CD8-positive, alpha-beta T cell (primary cell): ENCODE measurements at regions of chr1 and their contacts with region 1.

Region 1: GRCh38 chr1:206734499-206735142 is 36.0 kb upstream of the IL19 start:
- DNase-seq: peak; percentile 66 to 87 (median 82)
- ATAC-seq: peak; percentile 57
- H3K4me3 ChIP-seq: no peak overlapping the region
- H3K4me3 Mint-ChIP-seq: no peak overlapping the region
- H3K27ac ChIP-seq: peak overlapping the region in 1 of 2 experiments; percentile 54
- H3K27ac Mint-ChIP-seq: peak overlapping the region; percentile 91
- H3K4me1 ChIP-seq: peaks cover 55% of the 10 kb centered on the region
- H3K4me1 Mint-ChIP-seq: peaks cover 55% of the 10 kb centered on the region
- H3K27me3 ChIP-seq: no peaks in the 10 kb centered on the region
- H3K27me3 Mint-ChIP-seq: no peaks in the 10 kb centered on the region
- CTCF ChIP-seq: peak; percentile 90

Region 2: DNA sequence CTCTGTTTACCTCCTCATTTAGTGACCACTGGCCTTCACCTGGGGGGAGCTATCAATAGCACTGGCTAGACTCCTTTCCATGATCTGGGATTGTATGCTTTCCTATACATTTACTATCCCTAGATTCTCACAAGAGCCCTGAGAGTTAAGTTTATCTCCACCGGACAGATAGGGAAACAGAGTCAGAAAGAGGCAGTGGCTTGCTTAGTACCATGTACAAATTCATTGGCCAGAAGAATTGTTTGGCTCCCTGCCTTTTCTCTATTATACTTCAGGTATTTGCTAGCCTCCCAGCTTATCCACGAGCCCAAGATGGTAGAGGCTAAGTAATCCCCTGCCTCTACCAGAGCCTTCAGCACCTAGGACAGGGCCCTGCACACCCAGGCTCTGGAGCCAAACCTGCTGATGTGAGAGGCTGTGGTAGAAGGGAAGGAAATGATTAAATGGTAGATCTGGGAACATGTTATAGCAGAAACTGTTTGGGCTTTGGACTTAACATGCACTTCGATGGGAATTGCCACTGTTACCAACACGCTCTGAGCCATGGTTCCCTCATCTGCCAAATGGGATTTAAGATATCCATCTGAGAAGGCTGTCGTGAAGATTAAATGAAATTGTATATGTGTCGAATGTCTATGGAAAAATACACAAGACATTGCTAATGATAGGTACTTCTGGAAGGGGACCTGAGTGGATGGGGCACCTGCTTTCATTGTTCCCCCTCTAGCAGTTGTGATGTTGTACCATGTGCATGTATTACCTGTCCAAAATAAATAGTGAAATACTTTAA is 1275.6 kb before region 1 on chr1:
- CTCF ChIA-PET with region 1: no interaction called
- POLR2A ChIA-PET with region 1: no interaction called
- intact Hi-C with region 1: no loop called
- DNase-seq: peak in 7 of 9 experiments; percentile 9 to 59 (median 49)
- ATAC-seq: peak; percentile 73
- H3K4me3 ChIP-seq: no peak overlapping the region
- H3K4me3 Mint-ChIP-seq: no peak overlapping the region
- H3K27ac ChIP-seq: no peak overlapping the region
- H3K27ac Mint-ChIP-seq: no peak overlapping the region
- H3K4me1 ChIP-seq: peaks cover 17% of the 10 kb centered on the region
- H3K4me1 Mint-ChIP-seq: peaks cover 12% of the 10 kb centered on the region
- H3K27me3 ChIP-seq: peaks cover 30 to 31% of the 10 kb centered on the region in 2 experiments
- H3K27me3 Mint-ChIP-seq: peaks cover 47% of the 10 kb centered on the region
- CTCF ChIP-seq: no peak

Region 3: GRCh38 chr1:206744683-206745082 is 10.1 kb after region 1 on chr1:
- CTCF ChIA-PET with region 1: interaction called, 39 read pairs
- POLR2A ChIA-PET with region 1: no interaction called
- intact Hi-C with region 1: no loop called
- DNase-seq: peak in 1 of 9 experiments; percentile 50
- ATAC-seq: peak; percentile 45
- H3K4me3 ChIP-seq: no peak overlapping the region
- H3K4me3 Mint-ChIP-seq: no peak overlapping the region
- H3K27ac ChIP-seq: no peak overlapping the region
- H3K27ac Mint-ChIP-seq: peak overlapping the region; percentile 46
- H3K4me1 ChIP-seq: peaks cover 11% of the 10 kb centered on the region
- H3K4me1 Mint-ChIP-seq: peaks cover 40% of the 10 kb centered on the region
- H3K27me3 ChIP-seq: no peaks in the 10 kb centered on the region
- H3K27me3 Mint-ChIP-seq: no peaks in the 10 kb centered on the region
- CTCF ChIP-seq: no peak

Region 4: GRCh38 chr1:206766251-206766856 is 31.7 kb after region 1 on chr1:
- CTCF ChIA-PET with region 1: interaction called, 117 read pairs
- POLR2A ChIA-PET with region 1: interaction called, 10 read pairs
- intact Hi-C with region 1: loop called (anchors 2 to 5 kb)
- DNase-seq: peak; percentile 47 to 89 (median 77)
- ATAC-seq: peak; percentile 77
- H3K4me3 ChIP-seq: peak overlapping the region; percentile 3 to 9
- H3K4me3 Mint-ChIP-seq: peak overlapping the region; percentile 61
- H3K27ac ChIP-seq: no peak overlapping the region
- H3K27ac Mint-ChIP-seq: peak overlapping the region; percentile 82
- H3K4me1 ChIP-seq: peaks cover 63% of the 10 kb centered on the region
- H3K4me1 Mint-ChIP-seq: peaks cover 61% of the 10 kb centered on the region
- H3K27me3 ChIP-seq: no peaks in the 10 kb centered on the region
- H3K27me3 Mint-ChIP-seq: no peaks in the 10 kb centered on the region
- CTCF ChIP-seq: no peak

Region 5: DNA sequence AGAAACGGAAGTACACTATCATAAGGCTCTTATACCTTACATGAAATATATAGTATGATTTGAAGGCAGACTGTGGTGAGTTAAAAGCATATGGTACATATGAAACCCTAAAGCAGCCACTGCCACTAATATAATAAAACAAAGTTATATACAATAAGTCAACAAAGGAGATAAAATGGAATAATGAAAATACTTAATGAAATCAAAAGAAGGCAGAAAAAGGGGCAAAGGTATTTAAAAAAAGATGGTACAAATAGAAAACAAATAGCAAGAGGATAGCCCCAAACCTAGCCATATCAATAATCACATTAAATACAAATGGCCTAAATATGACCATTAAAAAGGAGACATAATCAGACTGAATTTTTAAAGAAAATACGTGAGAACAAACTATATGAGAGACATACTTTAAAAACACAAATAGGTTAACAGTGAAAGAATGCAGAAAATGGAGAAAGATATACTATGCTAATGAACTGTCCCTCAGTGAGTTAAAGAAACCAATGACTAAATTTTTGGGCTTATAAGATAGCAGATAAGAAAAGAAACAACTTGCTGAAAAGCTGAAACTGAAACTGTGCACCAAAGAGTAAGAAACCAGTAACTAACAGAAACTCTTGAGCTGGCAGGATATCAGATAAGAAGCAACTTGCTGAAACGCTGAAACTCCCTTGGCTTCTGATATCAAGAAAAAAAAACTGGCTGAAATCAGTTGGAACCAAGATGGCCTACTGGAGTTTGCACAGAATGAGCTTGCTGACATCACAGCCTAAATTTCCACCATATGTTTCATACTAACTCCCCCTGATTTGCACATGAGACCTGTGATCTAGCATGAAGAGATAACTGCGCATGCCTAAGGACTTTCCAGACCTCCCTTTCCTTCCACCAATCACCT is 82.0 kb after region 1 on chr1:
- CTCF ChIA-PET with region 1: interaction called, 628 read pairs
- POLR2A ChIA-PET with region 1: interaction called, 4 read pairs
- intact Hi-C with region 1: no loop called
- DNase-seq: peak in 2 of 9 experiments; percentile 66 to 78
- ATAC-seq: peak; percentile 83
- H3K4me3 ChIP-seq: no peak overlapping the region
- H3K4me3 Mint-ChIP-seq: peak overlapping the region; percentile 49
- H3K27ac ChIP-seq: peak overlapping the region; percentile 1 to 47
- H3K27ac Mint-ChIP-seq: peak overlapping the region; percentile 86
- H3K4me1 ChIP-seq: peaks cover 12% of the 10 kb centered on the region
- H3K4me1 Mint-ChIP-seq: peaks cover 19% of the 10 kb centered on the region
- H3K27me3 ChIP-seq: no peaks in the 10 kb centered on the region
- H3K27me3 Mint-ChIP-seq: no peaks in the 10 kb centered on the region
- CTCF ChIP-seq: no peak

Region 6: GRCh38 chr1:206833106-206833680 is 98.6 kb after region 1 on chr1:
- CTCF ChIA-PET with region 1: interaction called, 17 read pairs
- POLR2A ChIA-PET with region 1: interaction called, 4 read pairs
- intact Hi-C with region 1: no loop called
- DNase-seq: no peak
- ATAC-seq: no peak
- H3K4me3 ChIP-seq: no peak overlapping the region
- H3K4me3 Mint-ChIP-seq: no peak overlapping the region
- H3K27ac ChIP-seq: no peak overlapping the region
- H3K27ac Mint-ChIP-seq: no peak overlapping the region
- H3K4me1 ChIP-seq: peaks cover 25% of the 10 kb centered on the region
- H3K4me1 Mint-ChIP-seq: peaks cover 47% of the 10 kb centered on the region
- H3K27me3 ChIP-seq: no peaks in the 10 kb centered on the region
- H3K27me3 Mint-ChIP-seq: no peaks in the 10 kb centered on the region
- CTCF ChIP-seq: no peak

Region 7: GRCh38 chr1:206865013-206865671 is 130.5 kb after region 1 on chr1 and contains the start of gene IL20:
- CTCF ChIA-PET with region 1: interaction called, 17 read pairs
- POLR2A ChIA-PET with region 1: no interaction called
- intact Hi-C with region 1: no loop called
- DNase-seq: peak; percentile 72 to 93 (median 86)
- ATAC-seq: peak; percentile 97
- H3K4me3 ChIP-seq: no peak within 1 kb of the TSS
- H3K4me3 Mint-ChIP-seq: no peak within 1 kb of the TSS
- H3K27ac ChIP-seq: no peak within 1 kb of the TSS
- H3K27ac Mint-ChIP-seq: no peak within 1 kb of the TSS
- H3K4me1 ChIP-seq: peaks cover 7% of the 10 kb centered on the region
- H3K4me1 Mint-ChIP-seq: peaks cover 7% of the 10 kb centered on the region
- H3K27me3 ChIP-seq: no peaks in the 10 kb centered on the region
- H3K27me3 Mint-ChIP-seq: no peaks in the 10 kb centered on the region
- CTCF ChIP-seq: peak; percentile 91
- total RNA-seq, gene IL20: not detected

Region 8: GRCh38 chr1:206962272-206962671 is 227.7 kb after region 1 on chr1:
- CTCF ChIA-PET with region 1: no interaction called
- POLR2A ChIA-PET with region 1: no interaction called
- intact Hi-C with region 1: no loop called
- DNase-seq: no peak
- ATAC-seq: no peak
- H3K4me3 ChIP-seq: no peak overlapping the region
- H3K4me3 Mint-ChIP-seq: no peak overlapping the region
- H3K27ac ChIP-seq: no peak overlapping the region
- H3K27ac Mint-ChIP-seq: peak overlapping the region; percentile 12
- H3K4me1 ChIP-seq: peaks cover 15% of the 10 kb centered on the region
- H3K4me1 Mint-ChIP-seq: peaks cover 21% of the 10 kb centered on the region
- H3K27me3 ChIP-seq: no peaks in the 10 kb centered on the region
- H3K27me3 Mint-ChIP-seq: no peaks in the 10 kb centered on the region
- CTCF ChIP-seq: no peak

Region 9: GRCh38 chr1:207052911-207053769 is 318.5 kb after region 1 on chr1 and contains the start of gene PFKFB2:
- CTCF ChIA-PET with region 1: no interaction called
- POLR2A ChIA-PET with region 1: no interaction called
- intact Hi-C with region 1: loop called in 1 of 2 experiments (anchors 10 kb)
- DNase-seq: peak; percentile 88 to 97 (median 95)
- ATAC-seq: peak; percentile 87
- H3K4me3 ChIP-seq: peak within 1 kb of the TSS; percentile 70 to 82
- H3K4me3 Mint-ChIP-seq: peak within 1 kb of the TSS; percentile 97
- H3K27ac ChIP-seq: peak within 1 kb of the TSS; percentile 70 to 83
- H3K27ac Mint-ChIP-seq: peak within 1 kb of the TSS; percentile 98
- H3K4me1 ChIP-seq: peaks cover 28% of the 10 kb centered on the region
- H3K4me1 Mint-ChIP-seq: peaks cover 44% of the 10 kb centered on the region
- H3K27me3 ChIP-seq: no peaks in the 10 kb centered on the region
- H3K27me3 Mint-ChIP-seq: no peaks in the 10 kb centered on the region
- CTCF ChIP-seq: peak; percentile 21
- total RNA-seq, gene PFKFB2: 8.1 to 8.5 TPM

Region 10: DNA sequence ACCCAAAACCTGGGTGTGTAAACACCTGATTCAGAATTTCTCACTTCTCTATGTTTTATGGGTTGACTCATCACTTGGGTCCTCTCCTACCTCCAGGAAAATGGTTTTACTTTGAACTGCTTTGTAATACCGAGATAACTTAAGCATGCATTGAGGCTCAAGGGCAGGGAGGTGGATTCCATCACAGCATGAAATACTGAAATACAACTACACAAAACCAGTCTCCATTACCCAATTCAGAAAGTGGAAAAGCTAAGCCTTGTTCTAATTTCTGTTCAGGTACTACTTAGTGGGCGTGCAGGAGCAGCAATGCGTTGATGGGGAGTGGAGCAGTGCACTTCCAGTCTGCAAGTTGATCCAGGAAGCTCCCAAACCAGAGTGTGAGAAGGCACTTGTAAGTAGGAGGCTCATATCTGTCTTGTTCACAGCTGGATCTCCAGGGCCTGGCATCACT is 363.3 kb after region 1 on chr1:
- CTCF ChIA-PET with region 1: no interaction called
- POLR2A ChIA-PET with region 1: no interaction called
- intact Hi-C with region 1: no loop called
- DNase-seq: no peak
- ATAC-seq: no peak
- H3K4me3 ChIP-seq: no peak overlapping the region
- H3K4me3 Mint-ChIP-seq: no peak overlapping the region
- H3K27ac ChIP-seq: no peak overlapping the region
- H3K27ac Mint-ChIP-seq: no peak overlapping the region
- H3K4me1 ChIP-seq: no peaks in the 10 kb centered on the region
- H3K4me1 Mint-ChIP-seq: no peaks in the 10 kb centered on the region
- H3K27me3 ChIP-seq: no peaks in the 10 kb centered on the region
- H3K27me3 Mint-ChIP-seq: no peaks in the 10 kb centered on the region
- CTCF ChIP-seq: no peak

Region 11: DNA sequence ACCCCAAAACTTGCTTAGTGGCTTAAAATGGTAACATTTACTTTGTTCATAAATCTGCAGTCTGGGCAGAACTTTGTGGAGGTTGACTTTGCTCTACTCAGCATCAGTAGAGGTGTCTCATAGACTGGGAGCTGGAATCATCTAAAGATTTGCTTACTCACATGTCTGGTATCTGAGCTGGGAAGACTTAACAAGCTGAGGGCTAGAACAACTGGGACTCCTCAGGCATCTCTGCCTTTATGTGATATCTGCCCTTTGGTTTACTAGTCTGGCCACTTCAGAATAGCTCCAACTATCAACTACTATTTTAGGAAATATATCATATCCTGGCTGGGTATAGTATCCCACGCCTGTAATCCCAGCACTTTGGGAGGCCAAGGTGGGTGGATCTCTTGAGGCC is 451.9 kb after region 1 on chr1:
- CTCF ChIA-PET with region 1: no interaction called
- POLR2A ChIA-PET with region 1: no interaction called
- intact Hi-C with region 1: no loop called
- DNase-seq: no peak
- ATAC-seq: no peak
- H3K4me3 ChIP-seq: no peak overlapping the region
- H3K4me3 Mint-ChIP-seq: no peak overlapping the region
- H3K27ac ChIP-seq: no peak overlapping the region
- H3K27ac Mint-ChIP-seq: no peak overlapping the region
- H3K4me1 ChIP-seq: peaks cover 5% of the 10 kb centered on the region
- H3K4me1 Mint-ChIP-seq: peaks cover 9% of the 10 kb centered on the region
- H3K27me3 ChIP-seq: no peaks in the 10 kb centered on the region
- H3K27me3 Mint-ChIP-seq: no peaks in the 10 kb centered on the region
- CTCF ChIP-seq: no peak